Heart left ventricle (tissue), 16 donors: ENCODE measurements at regions of chr2 and their contacts with region 1.

Region 1: DNA sequence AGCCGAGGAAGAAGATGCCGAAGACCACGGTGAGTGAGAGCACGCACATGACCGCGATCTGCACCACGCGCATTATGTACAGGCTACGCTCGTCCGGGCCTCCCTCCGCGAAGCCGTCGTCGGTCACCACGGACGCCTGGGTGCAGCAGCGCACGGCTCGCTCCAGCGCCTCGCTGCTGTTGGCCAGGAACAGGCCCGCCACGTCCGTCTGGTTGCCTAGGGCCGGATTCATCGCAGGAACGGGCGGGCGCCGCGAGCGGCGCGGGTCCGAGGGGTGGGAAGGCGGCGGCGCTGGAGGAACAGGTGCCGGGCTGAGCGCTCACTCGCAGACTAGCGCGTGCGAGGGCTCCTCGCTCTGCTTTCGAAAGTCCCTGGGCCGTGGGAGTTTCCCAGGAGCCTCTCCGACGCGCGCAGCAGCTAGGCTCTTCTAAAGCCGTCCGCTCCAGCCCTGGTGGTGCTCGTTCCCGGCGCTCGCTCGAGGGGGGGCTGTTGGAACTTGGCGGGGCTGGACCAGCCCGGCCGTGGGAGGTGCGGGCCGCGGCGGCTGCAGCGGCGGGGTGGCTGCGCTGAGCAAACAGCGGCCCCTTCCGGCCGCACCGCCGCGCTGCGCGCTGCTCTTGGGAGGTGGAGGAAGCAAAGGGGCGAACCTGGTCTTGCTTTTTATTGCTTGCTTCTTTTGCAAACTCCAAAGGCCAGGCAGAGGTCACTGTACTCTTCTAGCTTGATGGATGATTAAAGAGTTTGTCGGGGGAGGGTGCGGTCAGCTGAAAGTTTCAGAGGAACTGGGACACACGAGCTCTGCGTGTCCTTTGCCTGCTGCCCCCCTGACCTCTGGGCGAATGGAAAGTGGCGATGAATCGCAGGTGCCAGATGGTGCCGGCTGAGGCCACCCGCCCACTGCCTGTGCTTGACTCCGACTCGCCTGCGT is at the start of gene RPRM:
- DNase-seq: peak; percentile 56 to 73 (median 65)
- ATAC-seq: peak in 3 of 4 donors; percentile 90 to 95 (median 91)
- H3K4me3 ChIP-seq: peak within 1 kb of the TSS; percentile 17 to 57 (median 47)
- H3K27ac ChIP-seq: peak within 1 kb of the TSS in 1 of 12 donors; percentile 80
- H3K4me1 ChIP-seq: peaks cover 0 to 26% (median 22%) of the 10 kb centered on the region in 12 donors
- H3K27me3 ChIP-seq: peaks cover 7 to 86% (median 51%) of the 10 kb centered on the region in 9 donors
- CTCF ChIP-seq: peak; percentile 61 to 91 (median 84)
- POLR2A ChIP-seq: no peak
- total RNA-seq, gene RPRM: 2.3 TPM in 1 of 9 donors, not detected in the others

Region 2: GRCh38 chr2:152861349-152861942 is 617.2 kb before region 1 on chr2:
- intact Hi-C with region 1: loop called in 1 of 10 experiments (anchors 5 kb)
- DNase-seq: no peak
- ATAC-seq: no peak
- H3K4me3 ChIP-seq: no peak overlapping the region
- H3K27ac ChIP-seq: no peak overlapping the region
- H3K4me1 ChIP-seq: no peaks in the 10 kb centered on the region
- H3K27me3 ChIP-seq: no peaks in the 10 kb centered on the region
- CTCF ChIP-seq: peak in 11 of 12 donors; percentile 16 to 67 (median 48)
- POLR2A ChIP-seq: no peak

Region 3: DNA sequence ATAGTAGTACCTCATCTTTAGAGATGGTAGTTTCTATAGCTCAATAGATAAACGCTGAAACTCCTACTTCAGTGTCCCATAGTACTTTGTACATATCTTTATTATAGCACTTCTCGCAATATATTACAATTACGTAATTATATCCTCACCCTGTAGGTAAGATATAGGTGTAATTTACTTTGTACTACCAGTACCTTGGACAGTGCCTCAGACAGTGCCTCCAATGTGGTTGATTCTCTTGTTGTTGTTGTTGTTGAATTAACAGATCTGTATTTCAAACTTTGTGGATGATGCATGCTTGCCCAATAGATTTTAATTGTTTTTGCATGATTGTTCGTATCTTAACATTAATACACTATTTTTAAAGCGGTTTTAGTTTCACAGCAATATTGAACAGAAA is 571.6 kb before region 1 on chr2:
- intact Hi-C with region 1: no loop called
- DNase-seq: no peak
- ATAC-seq: no peak
- H3K4me3 ChIP-seq: no peak overlapping the region
- H3K27ac ChIP-seq: no peak overlapping the region
- H3K4me1 ChIP-seq: no peaks in the 10 kb centered on the region
- H3K27me3 ChIP-seq: no peaks in the 10 kb centered on the region
- CTCF ChIP-seq: no peak
- POLR2A ChIP-seq: no peak